ENCODE measurements at regions of chr3 and their contacts with region 1.

Region 1: DNA sequence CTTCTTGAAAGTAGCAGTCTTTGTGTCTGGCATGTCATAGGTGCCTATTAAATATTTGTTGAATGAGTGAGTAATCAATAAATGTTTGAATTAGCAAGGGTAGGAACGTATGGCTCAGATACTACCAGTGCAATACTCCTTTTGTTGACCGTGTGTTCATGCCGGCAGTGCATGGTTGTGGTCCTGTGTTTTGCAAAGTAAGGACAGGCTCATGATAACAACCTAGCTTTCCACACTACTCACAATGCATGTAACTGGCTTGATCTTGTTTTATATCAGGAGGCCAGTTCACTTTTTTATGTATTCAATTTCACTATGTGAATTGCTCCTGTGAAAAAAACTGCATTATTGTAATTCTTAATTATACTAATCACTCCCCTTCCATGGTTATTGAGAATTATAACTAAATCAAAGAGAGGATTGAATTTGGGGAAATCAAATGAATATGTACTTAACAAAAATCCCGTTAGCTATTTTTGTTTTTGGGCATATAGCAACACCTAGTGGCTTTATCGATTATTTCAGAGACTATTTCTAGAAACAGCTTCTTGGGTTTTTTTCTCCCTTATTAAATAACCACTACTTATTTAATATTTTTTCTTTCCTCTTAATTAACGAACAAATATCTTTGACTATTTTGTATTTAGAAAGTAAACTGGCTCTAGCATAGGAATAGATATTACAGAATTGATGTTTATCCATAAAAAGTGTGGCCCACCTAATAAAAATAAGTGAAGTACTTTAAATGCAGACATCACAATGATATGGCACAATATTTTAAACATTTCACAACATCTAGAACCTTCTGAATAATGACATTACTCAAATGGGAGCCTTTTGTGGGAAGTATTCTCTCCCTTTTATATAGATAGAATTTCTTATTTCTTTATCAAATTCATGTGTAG is 218.5 kb downstream of the BBX start:
- DNase-seq: peak in 2 of 9 experiments; percentile 24 to 45
- ATAC-seq: no peak
- H3K4me3 ChIP-seq: no peak overlapping the region
- H3K4me3 Mint-ChIP-seq: no peak overlapping the region
- H3K27ac ChIP-seq: no peak overlapping the region
- H3K27ac Mint-ChIP-seq: peak overlapping the region; percentile 20
- H3K4me1 ChIP-seq: no peaks in the 10 kb centered on the region
- H3K4me1 Mint-ChIP-seq: no peaks in the 10 kb centered on the region
- H3K27me3 ChIP-seq: no peaks in the 10 kb centered on the region
- H3K27me3 Mint-ChIP-seq: no peaks in the 10 kb centered on the region
- CTCF ChIP-seq: peak; percentile 74

Region 2: DNA sequence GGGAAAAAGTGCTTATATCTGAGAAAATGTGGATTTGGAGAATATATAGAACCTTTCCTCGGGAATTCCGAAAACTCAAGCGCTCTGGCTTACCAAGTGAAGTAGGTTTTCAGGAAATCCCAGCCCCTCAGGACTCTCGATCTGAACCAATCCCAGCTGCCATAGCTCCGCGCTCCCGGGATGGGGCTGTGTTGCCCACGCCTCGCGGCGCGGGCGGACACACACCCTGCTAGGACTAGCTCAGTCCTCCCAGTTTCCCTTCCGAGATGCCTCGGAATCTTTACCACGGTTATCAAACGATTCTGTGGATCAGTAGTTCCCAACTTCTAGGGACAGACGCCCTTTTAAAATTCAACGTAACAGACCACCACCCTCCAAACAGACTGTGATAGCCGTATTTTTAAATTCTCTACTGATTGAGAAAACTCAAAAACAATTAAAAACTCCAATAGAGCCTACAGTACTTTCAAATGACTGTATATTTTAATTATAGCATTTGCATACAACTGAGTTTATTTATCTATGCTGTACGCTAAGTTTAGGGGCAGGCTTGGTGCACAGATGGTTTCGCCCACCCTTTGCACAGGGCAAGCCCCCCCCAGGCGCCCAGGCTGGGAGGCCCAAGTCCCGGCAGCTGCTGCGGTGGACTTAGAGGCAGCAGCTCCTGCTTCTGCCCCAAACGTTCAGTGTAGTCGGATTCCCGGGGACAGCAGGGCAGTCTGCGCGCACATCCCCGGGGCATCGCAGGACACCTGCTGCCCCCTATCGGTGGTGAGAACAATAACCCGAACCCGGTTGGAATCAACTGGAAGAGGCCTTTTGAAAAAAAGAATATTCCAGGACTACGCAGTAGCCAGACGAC is 311.7 kb before region 1 on chr3:
- CTCF ChIA-PET with region 1: no interaction called
- POLR2A ChIA-PET with region 1: no interaction called
- intact Hi-C with region 1: loop called in 1 of 2 experiments (anchors 10 kb)
- DNase-seq: peak; percentile 19 to 78 (median 47)
- ATAC-seq: peak; percentile 66
- H3K4me3 ChIP-seq: peak overlapping the region; percentile 57 to 69
- H3K4me3 Mint-ChIP-seq: peak overlapping the region; percentile 89
- H3K27ac ChIP-seq: no peak overlapping the region
- H3K27ac Mint-ChIP-seq: peak overlapping the region; percentile 14
- H3K4me1 ChIP-seq: peaks cover 11% of the 10 kb centered on the region
- H3K4me1 Mint-ChIP-seq: peaks cover 19% of the 10 kb centered on the region
- H3K27me3 ChIP-seq: peaks cover 0 to 3% of the 10 kb centered on the region in 2 experiments
- H3K27me3 Mint-ChIP-seq: peaks cover 13% of the 10 kb centered on the region
- CTCF ChIP-seq: peak; percentile 77

Region 3: GRCh38 chr3:107574650-107575049 is 166.6 kb before region 1 on chr3:
- CTCF ChIA-PET with region 1: interaction called, 4 read pairs
- POLR2A ChIA-PET with region 1: no interaction called
- intact Hi-C with region 1: loop called (anchors 2 kb)
- DNase-seq: peak in 2 of 9 experiments; percentile 30 to 42
- ATAC-seq: no peak
- H3K4me3 ChIP-seq: no peak overlapping the region
- H3K4me3 Mint-ChIP-seq: no peak overlapping the region
- H3K27ac ChIP-seq: no peak overlapping the region
- H3K27ac Mint-ChIP-seq: no peak overlapping the region
- H3K4me1 ChIP-seq: peaks cover 6% of the 10 kb centered on the region
- H3K4me1 Mint-ChIP-seq: peaks cover 46% of the 10 kb centered on the region
- H3K27me3 ChIP-seq: no peaks in the 10 kb centered on the region
- H3K27me3 Mint-ChIP-seq: no peaks in the 10 kb centered on the region
- CTCF ChIP-seq: peak; percentile 29

Region 4: GRCh38 chr3:107660306-107660976 is 80.8 kb before region 1 on chr3:
- CTCF ChIA-PET with region 1: interaction called, 11 read pairs
- POLR2A ChIA-PET with region 1: no interaction called
- intact Hi-C with region 1: no loop called
- DNase-seq: peak in 2 of 9 experiments; percentile 52 to 61
- ATAC-seq: no peak
- H3K4me3 ChIP-seq: no peak overlapping the region
- H3K4me3 Mint-ChIP-seq: no peak overlapping the region
- H3K27ac ChIP-seq: no peak overlapping the region
- H3K27ac Mint-ChIP-seq: no peak overlapping the region
- H3K4me1 ChIP-seq: peaks cover 17% of the 10 kb centered on the region
- H3K4me1 Mint-ChIP-seq: peaks cover 31% of the 10 kb centered on the region
- H3K27me3 ChIP-seq: no peaks in the 10 kb centered on the region
- H3K27me3 Mint-ChIP-seq: no peaks in the 10 kb centered on the region
- CTCF ChIP-seq: peak; percentile 73

Region 5: GRCh38 chr3:107690522-107691138 is 50.6 kb before region 1 on chr3:
- CTCF ChIA-PET with region 1: interaction called, 5 read pairs
- POLR2A ChIA-PET with region 1: no interaction called
- intact Hi-C with region 1: loop called in 1 of 2 experiments (anchors 1 kb)
- DNase-seq: peak in 3 of 9 experiments; percentile 8 to 70 (median 59)
- ATAC-seq: peak; percentile 81
- H3K4me3 ChIP-seq: no peak overlapping the region
- H3K4me3 Mint-ChIP-seq: no peak overlapping the region
- H3K27ac ChIP-seq: no peak overlapping the region
- H3K27ac Mint-ChIP-seq: no peak overlapping the region
- H3K4me1 ChIP-seq: peaks cover 3% of the 10 kb centered on the region
- H3K4me1 Mint-ChIP-seq: peaks cover 23% of the 10 kb centered on the region
- H3K27me3 ChIP-seq: no peaks in the 10 kb centered on the region
- H3K27me3 Mint-ChIP-seq: no peaks in the 10 kb centered on the region
- CTCF ChIP-seq: peak; percentile 71